ENCODE measurements at regions of chr1 and their contacts with region 1.

Region 1: GRCh38 chr1:59046730-59047157 is 250.2 kb upstream of the FGGY start:
- DNase-seq: peak; percentile 70
- ATAC-seq: peak; percentile 92
- H3K4me3 Mint-ChIP-seq: no peak overlapping the region
- H3K27ac Mint-ChIP-seq: peak overlapping the region; percentile 76
- H3K4me1 Mint-ChIP-seq: peaks cover 34% of the 10 kb centered on the region
- H3K27me3 Mint-ChIP-seq: no peaks in the 10 kb centered on the region
- CTCF ChIP-seq: peak; percentile 39

Region 2: DNA sequence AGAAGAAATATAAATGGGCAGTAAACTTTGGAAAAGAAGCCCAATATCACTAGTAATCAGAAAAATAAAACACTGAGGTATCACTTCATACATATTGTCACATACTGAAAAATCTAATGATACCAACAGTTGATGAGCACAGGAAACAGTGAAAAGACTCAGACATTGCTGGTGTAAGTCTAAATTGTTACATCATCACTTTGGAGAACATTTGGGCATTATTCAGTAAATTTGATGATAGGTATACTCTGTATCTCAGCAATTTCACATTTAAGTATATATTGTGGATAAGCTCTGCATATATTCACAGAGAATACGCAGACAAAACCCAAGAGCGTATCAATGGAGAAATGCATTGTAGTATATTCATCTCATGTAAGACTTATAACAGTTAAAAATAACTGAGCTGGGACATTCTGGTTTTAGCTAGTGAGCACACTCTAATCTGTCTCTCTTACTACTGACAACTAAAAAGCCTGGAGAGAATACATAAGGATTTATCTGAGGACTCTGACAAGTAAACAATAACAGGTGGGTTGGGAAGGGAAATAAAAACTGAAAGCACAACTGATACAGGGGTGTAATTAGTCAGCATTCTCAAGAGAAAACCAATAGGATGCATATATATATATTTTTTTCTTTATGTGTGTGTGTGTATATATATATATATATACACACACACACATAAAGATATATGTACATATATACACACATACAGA is 50.2 kb before region 1 on chr1:
- CTCF ChIA-PET with region 1: no interaction called
- POLR2A ChIA-PET with region 1: no interaction called
- intact Hi-C with region 1: no loop called
- DNase-seq: no peak
- ATAC-seq: no peak
- H3K4me3 Mint-ChIP-seq: no peak overlapping the region
- H3K27ac Mint-ChIP-seq: no peak overlapping the region
- H3K4me1 Mint-ChIP-seq: peaks cover 6% of the 10 kb centered on the region
- H3K27me3 Mint-ChIP-seq: no peaks in the 10 kb centered on the region
- CTCF ChIP-seq: no peak

Region 3: DNA sequence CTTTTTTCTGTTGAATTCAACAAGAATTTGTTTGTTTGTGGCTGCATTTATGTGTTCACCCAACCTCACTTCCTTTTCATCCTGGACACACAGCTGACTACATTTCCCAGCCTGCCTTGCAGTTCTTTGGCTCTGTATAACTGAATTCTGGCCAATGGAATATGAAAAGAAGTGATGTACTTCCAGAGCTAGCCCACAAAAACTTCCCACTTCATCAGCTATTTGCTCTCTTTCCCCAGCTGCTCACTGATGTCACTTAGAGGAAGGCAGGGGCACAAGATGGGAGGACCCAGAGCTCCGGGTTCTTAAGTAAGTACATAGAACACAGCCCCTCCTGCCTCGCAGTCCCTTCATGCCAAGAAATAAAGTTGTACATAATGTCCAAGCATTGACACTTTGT is 15.1 kb after region 1 on chr1:
- CTCF ChIA-PET with region 1: interaction called, 13 read pairs
- POLR2A ChIA-PET with region 1: interaction called, 17 read pairs
- intact Hi-C with region 1: no loop called
- DNase-seq: no peak
- ATAC-seq: no peak
- H3K4me3 Mint-ChIP-seq: no peak overlapping the region
- H3K27ac Mint-ChIP-seq: no peak overlapping the region
- H3K4me1 Mint-ChIP-seq: peaks cover 29% of the 10 kb centered on the region
- H3K27me3 Mint-ChIP-seq: no peaks in the 10 kb centered on the region
- CTCF ChIP-seq: no peak